ENCODE measurements at regions of chr10 and their contacts with region 1.

Region 1: DNA sequence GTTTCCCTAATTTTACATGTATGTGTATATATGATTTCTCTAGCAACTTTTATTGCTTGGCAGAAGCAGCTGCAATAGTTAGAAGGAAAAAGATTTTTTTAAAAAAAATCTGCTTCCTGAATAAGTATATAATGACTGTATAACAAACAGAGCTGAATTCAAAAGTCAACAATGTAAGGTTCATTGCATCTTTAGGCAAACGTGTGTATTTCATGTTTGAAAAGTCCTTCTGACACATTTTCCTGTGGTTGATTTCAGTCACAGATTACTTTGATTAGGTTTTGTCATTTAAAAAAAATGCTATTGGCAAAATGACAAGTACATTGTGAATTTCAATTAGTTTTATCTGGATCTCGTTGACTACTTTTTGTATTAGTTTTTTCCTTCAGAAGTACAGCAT is 231.0 kb downstream of the CSTF2T start:
- DNase-seq: peak; percentile 98
- ATAC-seq: peak; percentile 86
- H3K4me3 ChIP-seq: no peak overlapping the region
- H3K27ac ChIP-seq: peak overlapping the region; percentile 43
- H3K4me1 ChIP-seq: peaks cover 31% of the 10 kb centered on the region
- H3K27me3 ChIP-seq: no peaks in the 10 kb centered on the region
- CTCF ChIP-seq: no peak

Region 2: DNA sequence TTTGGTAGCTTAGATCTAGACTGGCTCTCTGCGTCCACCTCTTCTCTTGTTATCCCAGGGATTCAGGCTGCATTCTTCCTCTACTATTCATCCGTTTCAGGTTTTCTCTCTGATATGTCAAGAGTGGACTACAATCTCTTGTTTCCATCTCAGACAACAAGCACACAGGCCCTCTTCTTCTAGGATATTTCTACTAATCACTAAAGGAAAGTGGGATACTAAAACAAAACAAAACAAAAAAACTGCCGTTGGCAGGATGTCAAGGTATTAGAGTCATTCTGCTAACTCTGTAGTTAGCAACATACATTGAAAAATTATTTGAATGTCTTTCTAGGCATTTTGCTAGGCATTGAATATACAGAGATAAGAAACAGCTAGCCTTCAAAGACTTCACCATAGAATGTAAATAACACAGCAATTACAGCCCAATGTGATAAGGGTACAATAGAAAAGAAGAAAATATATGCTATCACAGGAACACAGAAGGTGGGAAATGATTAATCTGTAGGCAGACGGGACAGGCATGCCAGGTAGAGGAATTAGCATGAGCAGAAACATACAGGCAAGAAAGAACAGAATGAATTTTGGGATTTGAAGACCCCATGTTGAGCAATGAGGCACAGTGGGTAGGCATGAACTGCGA is 20.5 kb after region 1 on chr10:
- CTCF ChIA-PET with region 1: no interaction called
- POLR2A ChIA-PET with region 1: no interaction called
- intact Hi-C with region 1: no loop called
- DNase-seq: no peak
- ATAC-seq: no peak
- H3K4me3 ChIP-seq: no peak overlapping the region
- H3K27ac ChIP-seq: no peak overlapping the region
- H3K4me1 ChIP-seq: no peaks in the 10 kb centered on the region
- H3K27me3 ChIP-seq: peaks cover 3% of the 10 kb centered on the region; the same call in 1 of the 2 replicates
- CTCF ChIP-seq: no peak

Region 3: GRCh38 chr10:51683031-51683691 is 214.7 kb after region 1 on chr10:
- CTCF ChIA-PET with region 1: no interaction called
- POLR2A ChIA-PET with region 1: no interaction called
- intact Hi-C with region 1: loop called (anchors 5 kb)
- DNase-seq: peak; percentile 84
- ATAC-seq: peak; percentile 65
- H3K4me3 ChIP-seq: no peak overlapping the region
- H3K27ac ChIP-seq: peak overlapping the region; percentile 55
- H3K4me1 ChIP-seq: peaks cover 36% of the 10 kb centered on the region
- H3K27me3 ChIP-seq: no peaks in the 10 kb centered on the region
- CTCF ChIP-seq: no peak

Region 4: GRCh38 chr10:51892965-51893658 is 424.7 kb after region 1 on chr10:
- CTCF ChIA-PET with region 1: no interaction called
- POLR2A ChIA-PET with region 1: no interaction called
- intact Hi-C with region 1: loop called (anchors 1 kb)
- DNase-seq: peak; percentile 85
- ATAC-seq: peak; percentile 93
- H3K4me3 ChIP-seq: no peak overlapping the region
- H3K27ac ChIP-seq: no peak overlapping the region
- H3K4me1 ChIP-seq: no peaks in the 10 kb centered on the region
- H3K27me3 ChIP-seq: no peaks in the 10 kb centered on the region
- CTCF ChIP-seq: peak; percentile 98

Measured in PC-3 (cell line).